ENCODE measurements at regions of chr14 and their contacts with region 1.

Region 1: DNA sequence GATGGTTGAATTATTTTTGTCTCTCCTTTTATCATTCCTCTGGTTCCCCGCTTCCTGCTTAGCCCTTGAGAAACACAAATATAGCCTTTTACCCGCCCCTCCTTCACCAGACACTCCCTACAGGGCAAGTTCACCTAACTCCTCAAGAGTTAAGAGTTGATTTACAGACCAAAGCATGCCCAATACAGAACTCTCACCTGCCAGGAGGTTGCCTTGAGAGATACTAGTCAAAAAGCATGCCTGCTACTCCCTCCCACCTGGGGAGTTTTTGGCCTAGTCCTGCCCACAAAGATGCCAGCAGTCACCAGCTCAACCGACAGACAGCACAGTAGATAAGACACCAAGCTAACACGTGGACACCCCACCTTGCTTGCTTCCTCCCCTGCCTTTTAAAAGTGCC is 11.2 kb downstream of the LGMN start:
- DNase-seq: no peak
- ATAC-seq: 0 out of 2 replicates have a peak, but pooled peaks have one; percentile 20
- H3K4me3 ChIP-seq: no peak overlapping the region
- H3K27ac ChIP-seq: no peak overlapping the region
- H3K4me1 ChIP-seq: no peaks in the 10 kb centered on the region
- H3K27me3 ChIP-seq: no peaks in the 10 kb centered on the region
- CTCF ChIP-seq: no peak

Region 2: DNA sequence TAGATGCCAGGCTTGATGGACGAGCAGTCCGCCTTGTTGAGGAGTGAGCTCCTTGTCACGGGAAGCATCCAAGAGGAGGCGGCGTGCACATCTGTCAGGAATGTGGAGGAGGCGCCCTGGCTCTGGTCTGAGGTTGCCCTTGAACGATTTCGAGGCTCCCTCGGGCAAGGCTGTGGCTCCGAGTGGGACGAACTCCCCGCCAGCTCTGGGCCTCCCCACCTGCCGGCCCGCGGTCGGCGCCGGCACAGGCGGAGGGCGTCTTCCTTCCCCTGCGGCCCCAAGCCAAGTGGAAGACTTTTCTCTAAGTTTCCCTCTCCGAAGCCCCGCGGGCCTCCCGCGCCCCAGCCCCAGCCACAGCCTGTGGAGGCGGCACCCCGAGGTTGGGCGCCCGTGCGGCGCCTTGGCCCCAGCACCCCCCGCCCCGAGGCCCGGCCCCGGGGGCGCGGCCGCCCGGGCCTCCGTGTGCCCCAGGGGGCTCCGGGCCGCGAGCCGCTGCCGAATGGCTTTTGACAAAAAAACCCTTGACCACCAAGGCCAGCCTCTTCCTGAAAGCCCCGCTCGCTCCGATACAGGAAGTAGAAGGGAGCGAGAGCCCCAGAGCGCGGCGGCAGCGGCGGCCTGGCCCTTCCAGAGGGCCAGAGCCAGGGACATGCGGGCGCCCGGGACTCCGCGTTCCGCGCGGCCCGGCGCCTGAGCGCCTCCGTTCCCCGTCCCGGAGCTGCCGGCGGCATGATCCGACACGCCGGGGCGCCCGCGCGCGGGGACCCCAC is 223.8 kb before region 1 on chr14 and contains the start of gene RIN3:
- CTCF ChIA-PET with region 1: no interaction called
- POLR2A ChIA-PET with region 1: interaction called, 19 read pairs
- intact Hi-C with region 1: no loop called
- DNase-seq: peak; percentile 16
- ATAC-seq: peak; percentile 30
- H3K4me3 ChIP-seq: peak within 1 kb of the TSS; percentile 69
- H3K27ac ChIP-seq: 0 out of 2 replicates have a peak within 1 kb of the TSS, but pooled peaks have one; percentile 20
- H3K4me1 ChIP-seq: peaks cover 30% of the 10 kb centered on the region
- H3K27me3 ChIP-seq: no peaks in the 10 kb centered on the region
- CTCF ChIP-seq: no peak
- total RNA-seq, gene RIN3: 4.8 and 6.2 TPM in 2 replicates

Region 3: DNA sequence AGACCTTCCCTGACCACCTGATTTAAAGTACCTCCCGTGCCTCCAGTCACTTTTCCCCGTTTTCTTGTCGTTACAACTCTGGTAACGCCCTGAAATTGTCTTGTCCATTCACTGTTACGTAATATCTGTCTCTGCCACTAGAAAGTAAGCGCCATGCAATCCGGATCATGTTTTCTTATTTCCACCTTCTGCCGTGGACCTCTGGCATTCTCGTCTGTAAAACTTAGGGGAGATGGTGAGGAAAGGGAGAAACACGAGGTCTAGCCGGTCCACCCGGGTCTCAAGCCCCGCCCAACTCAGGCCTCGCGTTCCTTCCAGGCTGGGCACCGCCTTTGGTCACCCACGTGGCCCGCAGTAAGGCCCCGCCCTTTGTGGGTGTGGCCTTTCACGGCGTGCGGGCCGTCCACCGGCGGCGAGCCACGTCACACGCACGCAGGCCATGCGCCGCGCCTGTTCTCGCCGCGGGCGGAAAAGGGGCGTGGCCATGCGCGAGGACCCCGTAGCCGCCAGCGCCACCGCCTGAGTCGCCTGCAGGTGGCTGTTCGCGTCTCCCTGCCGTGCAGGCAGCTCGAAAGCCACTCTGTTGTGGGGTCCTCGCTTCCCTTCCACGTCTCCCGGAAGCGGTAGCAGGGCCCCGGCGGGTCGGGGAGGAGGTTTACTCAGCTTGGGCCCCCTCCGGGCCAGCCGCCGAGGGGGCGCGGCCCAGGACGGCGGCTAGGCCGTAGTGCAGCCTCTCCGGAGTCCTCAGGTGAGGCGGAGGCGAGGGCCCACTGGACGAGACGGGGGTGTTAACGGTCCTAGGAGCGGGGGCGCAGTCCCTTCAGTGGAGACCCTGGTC is 56.7 kb after region 1 on chr14 and contains the start of gene GOLGA5:
- CTCF ChIA-PET with region 1: no interaction called
- POLR2A ChIA-PET with region 1: no interaction called
- intact Hi-C with region 1: no loop called
- DNase-seq: peak; percentile 97
- ATAC-seq: peak; percentile 97
- H3K4me3 ChIP-seq: peak within 1 kb of the TSS; percentile 91
- H3K27ac ChIP-seq: peak within 1 kb of the TSS; percentile 60
- H3K4me1 ChIP-seq: peaks cover 15% of the 10 kb centered on the region
- H3K27me3 ChIP-seq: no peaks in the 10 kb centered on the region
- CTCF ChIP-seq: no peak
- total RNA-seq, gene GOLGA5: 21.4 and 23.5 TPM in 2 replicates

Region 4: DNA sequence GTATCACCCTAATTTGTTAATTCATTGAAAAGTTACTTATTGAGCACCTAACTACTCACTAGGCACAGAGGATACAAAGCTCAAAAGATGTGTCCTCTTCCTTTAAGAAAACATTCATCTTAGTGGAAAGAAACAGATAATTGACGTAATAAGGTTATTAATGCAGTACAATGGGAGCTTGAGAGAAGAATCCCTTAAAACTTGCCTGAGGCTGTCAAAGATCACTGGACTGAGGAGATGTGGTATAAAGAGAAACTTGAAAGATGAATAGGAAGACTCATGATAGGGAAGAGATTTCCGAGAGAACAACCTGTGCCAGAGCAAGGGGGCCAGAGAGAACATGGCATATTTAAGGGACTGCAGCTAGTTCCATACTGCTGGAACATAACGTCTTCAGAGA is 76.0 kb after region 1 on chr14:
- CTCF ChIA-PET with region 1: no interaction called
- POLR2A ChIA-PET with region 1: no interaction called
- intact Hi-C with region 1: no loop called
- DNase-seq: no peak
- ATAC-seq: no peak
- H3K4me3 ChIP-seq: no peak overlapping the region
- H3K27ac ChIP-seq: no peak overlapping the region
- H3K4me1 ChIP-seq: no peaks in the 10 kb centered on the region
- H3K27me3 ChIP-seq: no peaks in the 10 kb centered on the region
- CTCF ChIP-seq: no peak

Region 5: DNA sequence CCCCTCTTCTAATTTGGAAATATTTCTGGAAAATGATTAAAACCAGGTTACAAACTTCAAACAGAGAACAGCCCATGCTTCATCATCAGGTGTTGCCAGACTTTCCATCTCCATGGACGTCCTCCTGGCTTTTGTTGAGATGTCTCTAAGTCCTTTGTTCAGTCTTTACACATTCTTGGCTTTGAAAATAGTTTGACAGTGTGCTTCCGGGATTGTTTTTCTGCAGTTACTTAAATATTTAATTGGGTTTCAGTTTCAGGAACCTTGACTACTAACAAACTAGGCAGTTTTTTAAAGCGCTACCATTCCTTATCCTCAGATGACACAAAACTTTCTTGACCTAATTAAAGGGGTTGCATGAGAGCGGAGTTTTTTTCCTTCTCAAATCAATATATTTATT is 104.7 kb after region 1 on chr14:
- CTCF ChIA-PET with region 1: no interaction called
- POLR2A ChIA-PET with region 1: no interaction called
- intact Hi-C with region 1: no loop called
- DNase-seq: no peak
- ATAC-seq: no peak
- H3K4me3 ChIP-seq: no peak overlapping the region
- H3K27ac ChIP-seq: no peak overlapping the region
- H3K4me1 ChIP-seq: no peaks in the 10 kb centered on the region; the same call in 1 of the 2 replicates
- H3K27me3 ChIP-seq: no peaks in the 10 kb centered on the region
- CTCF ChIP-seq: no peak

Measured in PC-3 (cell line).